SK-N-SH (cell line): ENCODE measurements at regions of chr17 and their contacts with region 1.

Region 1: DNA sequence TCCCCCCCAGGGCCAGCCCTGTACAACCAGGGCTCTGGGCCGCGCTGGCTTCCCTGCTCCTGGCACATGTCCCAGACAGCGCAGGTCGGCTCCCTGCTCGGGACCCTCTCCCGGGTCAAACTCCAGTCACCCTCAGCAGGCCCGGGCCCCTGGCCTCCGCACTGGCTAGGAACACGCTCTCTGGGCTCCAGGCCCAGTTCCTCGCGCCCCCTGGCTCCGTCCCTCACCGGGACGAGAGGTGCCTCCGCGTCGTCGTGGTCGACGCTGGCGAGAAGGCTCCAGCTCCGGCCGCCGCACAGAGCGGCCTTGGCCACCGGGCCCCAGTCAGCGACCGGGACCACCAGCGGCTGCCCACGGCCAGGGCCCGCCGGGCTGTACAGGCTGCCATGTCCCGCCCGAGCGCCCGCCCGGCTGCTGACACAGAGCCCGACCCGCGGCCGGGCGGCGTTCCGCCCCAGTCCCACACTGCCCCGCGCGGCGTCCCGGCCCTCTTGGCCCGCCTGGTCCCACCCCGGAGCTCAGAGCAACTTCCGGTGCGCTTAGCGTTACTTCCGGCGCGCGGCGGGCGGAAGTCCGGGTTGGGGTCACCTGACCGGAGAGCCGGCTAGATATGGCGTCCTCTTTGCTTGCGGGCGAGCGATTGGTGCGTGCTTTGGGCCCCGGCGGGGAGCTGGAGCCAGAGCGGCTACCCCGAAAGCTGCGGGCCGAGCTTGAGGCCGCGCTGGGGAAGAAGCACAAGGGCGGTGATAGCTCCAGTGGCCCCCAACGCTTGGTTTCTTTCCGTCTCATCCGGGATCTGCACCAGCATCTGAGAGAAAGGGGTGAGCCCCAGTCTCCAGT is at the start of gene POLDIP2:
- DNase-seq: peak; percentile 99
- H3K4me3 ChIP-seq: peak within 1 kb of the TSS; percentile 93 to 99
- H3K27ac ChIP-seq: peak within 1 kb of the TSS; percentile 55 to 69; a peak in 2 of 4 replicates
- H3K4me1 ChIP-seq: peaks cover 14 to 15% of the 10 kb centered on the region in 2 experiments; a peak in 3 of 4 replicates
- H3K27me3 ChIP-seq: no peaks in the 10 kb centered on the region
- CTCF ChIP-seq: peak; percentile 15; the same call in 1 of the 2 replicates
- EP300 ChIP-seq: peak in 1 of 2 experiments; percentile 24; a peak in 1 of 4 replicates
- RAD21 ChIP-seq: no peak
- polyA plus RNA-seq, gene POLDIP2: 96.1 and 98.1 TPM in 2 replicates

Region 2: GRCh38 chr17:28346746-28347246 is 10.5 kb before region 1 on chr17:
- CTCF ChIA-PET with region 1: interaction called, 3 read pairs
- POLR2A ChIA-PET with region 1: interaction called, 15 read pairs
- DNase-seq: peak; percentile 39
- H3K4me3 ChIP-seq: no peak overlapping the region
- H3K27ac ChIP-seq: peak overlapping the region; percentile 80 to 83
- H3K4me1 ChIP-seq: peaks cover 9 to 23% of the 10 kb centered on the region in 2 experiments
- H3K27me3 ChIP-seq: no peaks in the 10 kb centered on the region
- CTCF ChIP-seq: peak; percentile 39
- EP300 ChIP-seq: no peak
- RAD21 ChIP-seq: peak; percentile 23; the same call in 1 of the 2 replicates

Region 3: DNA sequence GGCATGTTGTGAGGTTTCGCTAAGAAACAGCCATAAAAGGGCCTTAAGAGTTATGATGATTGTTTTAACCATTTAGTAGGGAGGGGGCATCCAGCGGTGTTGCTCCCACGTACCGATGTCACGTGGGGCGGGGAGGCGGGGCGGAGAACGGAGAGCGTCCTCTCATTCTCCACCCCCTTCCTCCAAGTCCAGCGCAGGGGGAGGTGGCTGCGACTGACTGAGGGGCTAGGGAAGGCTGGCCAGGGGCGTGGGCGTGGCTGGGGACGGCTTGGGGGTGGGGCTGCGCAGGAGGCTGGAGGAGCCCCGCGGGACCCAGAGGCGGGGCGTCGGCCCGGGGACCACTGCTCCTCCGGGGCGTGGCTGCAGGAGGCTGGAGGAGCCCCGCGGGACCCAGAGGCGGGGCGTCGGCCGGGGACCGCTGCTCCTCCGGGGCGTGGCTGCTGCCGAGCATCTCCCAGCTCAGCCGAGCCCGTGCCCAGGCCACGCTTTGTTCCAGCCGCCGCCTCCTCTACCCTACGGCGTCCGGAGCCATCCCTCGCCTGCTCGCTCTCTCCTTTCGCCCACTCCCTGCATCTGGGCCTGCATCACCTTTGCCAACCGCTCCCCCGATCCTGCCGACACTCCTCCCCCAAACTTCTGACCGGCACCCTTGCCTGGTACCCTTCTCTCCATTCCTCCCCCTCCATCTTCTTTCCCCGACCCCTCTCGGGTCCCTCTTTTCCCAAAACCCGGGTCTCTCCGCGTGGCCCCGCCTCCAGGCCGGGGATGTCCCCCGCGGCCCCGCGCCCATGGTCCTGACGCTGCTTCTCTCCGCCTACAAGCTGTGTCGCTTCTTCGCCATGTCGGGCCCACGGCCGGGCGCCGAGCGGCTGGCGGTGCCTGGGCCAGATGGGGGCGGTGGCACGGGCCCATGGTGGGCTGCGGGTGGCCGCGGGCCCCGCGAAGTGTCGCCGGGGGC is 14.2 kb after region 1 on chr17 and contains the start of gene SARM1:
- CTCF ChIA-PET with region 1: interaction called, 7 read pairs
- POLR2A ChIA-PET with region 1: interaction called, 34 read pairs
- DNase-seq: peak; percentile 98
- H3K4me3 ChIP-seq: peak within 1 kb of the TSS; percentile 60 to 84
- H3K27ac ChIP-seq: peak within 1 kb of the TSS; percentile 73 to 90
- H3K4me1 ChIP-seq: peaks cover 15 to 28% of the 10 kb centered on the region in 2 experiments
- H3K27me3 ChIP-seq: no peaks in the 10 kb centered on the region
- CTCF ChIP-seq: no peak
- EP300 ChIP-seq: no peak
- RAD21 ChIP-seq: no peak
- polyA plus RNA-seq, gene SARM1: 17.4 and 17.9 TPM in 2 replicates

Region 4: DNA sequence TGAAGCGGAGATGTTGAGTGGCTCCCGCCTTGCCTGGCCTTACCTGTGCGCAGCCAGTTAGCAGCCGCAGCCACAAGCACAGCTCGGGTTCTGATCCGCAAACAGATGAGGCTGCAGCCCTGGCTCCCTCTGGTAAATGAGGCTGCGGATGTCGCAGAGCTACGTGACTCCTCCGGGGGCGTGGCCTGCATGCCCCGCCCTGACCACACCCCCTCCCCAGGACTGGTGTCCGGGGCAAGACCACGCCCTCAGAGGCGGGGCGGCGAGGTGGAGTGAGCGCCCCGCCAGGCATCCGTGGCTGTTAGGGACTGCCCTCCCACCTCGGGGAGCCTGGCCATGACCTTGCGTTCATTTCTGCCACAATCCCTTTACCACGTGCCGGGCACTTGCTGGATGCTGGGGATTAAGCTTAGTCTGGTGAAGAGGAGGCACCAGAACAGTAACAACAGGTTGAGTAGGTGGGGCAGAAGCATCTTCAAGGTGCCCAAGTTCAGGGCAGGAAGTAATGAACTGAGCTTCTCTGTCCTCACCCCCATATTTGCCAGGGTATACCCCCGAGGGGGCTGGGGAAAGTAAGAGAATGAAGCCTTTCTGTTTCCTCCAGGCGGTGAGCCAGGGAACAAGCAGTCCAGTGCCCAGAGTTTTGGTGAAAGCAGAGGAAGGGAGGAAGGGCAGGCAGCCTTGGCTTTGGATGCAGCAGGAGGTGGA is 219.6 kb after region 1 on chr17 and contains the start of gene ALDOC:
- CTCF ChIA-PET with region 1: no interaction called
- POLR2A ChIA-PET with region 1: no interaction called
- DNase-seq: peak; percentile 97
- H3K4me3 ChIP-seq: peak within 1 kb of the TSS in 1 of 2 experiments; percentile 24; a peak in 1 of 4 replicates
- H3K27ac ChIP-seq: peak within 1 kb of the TSS in 1 of 2 experiments; percentile 77; a peak in 2 of 4 replicates
- H3K4me1 ChIP-seq: peaks cover 0 to 36% of the 10 kb centered on the region in 2 experiments; a peak in 3 of 4 replicates
- H3K27me3 ChIP-seq: no peaks in the 10 kb centered on the region
- CTCF ChIP-seq: no peak
- EP300 ChIP-seq: no peak
- RAD21 ChIP-seq: no peak
- polyA plus RNA-seq, gene ALDOC: 10.1 and 10.3 TPM in 2 replicates